K562 (cell line): ENCODE measurements at regions of chr19 and their contacts with region 1.

Region 1: GRCh38 chr19:47881757-47882156 is 4.4 kb downstream of the SULT2A1 start:
- DNase-seq: peak in 1 of 4 experiments; percentile 18
- ATAC-seq: peak; percentile 71
- H3K4me3 ChIP-seq: no peak overlapping the region
- H3K27ac ChIP-seq: no peak overlapping the region
- H3K4me1 ChIP-seq: peaks cover 5 to 9% of the 10 kb centered on the region in 2 experiments
- H3K27me3 ChIP-seq: no peaks in the 10 kb centered on the region
- CTCF ChIP-seq: 0 out of 6 replicates have a peak, but pooled peaks of 1 of the 3 experiments have one; percentile 5
- EP300 ChIP-seq: no peak
- POLR2A ChIP-seq: no peak
- RAD21 ChIP-seq: no peak

Region 2: DNA sequence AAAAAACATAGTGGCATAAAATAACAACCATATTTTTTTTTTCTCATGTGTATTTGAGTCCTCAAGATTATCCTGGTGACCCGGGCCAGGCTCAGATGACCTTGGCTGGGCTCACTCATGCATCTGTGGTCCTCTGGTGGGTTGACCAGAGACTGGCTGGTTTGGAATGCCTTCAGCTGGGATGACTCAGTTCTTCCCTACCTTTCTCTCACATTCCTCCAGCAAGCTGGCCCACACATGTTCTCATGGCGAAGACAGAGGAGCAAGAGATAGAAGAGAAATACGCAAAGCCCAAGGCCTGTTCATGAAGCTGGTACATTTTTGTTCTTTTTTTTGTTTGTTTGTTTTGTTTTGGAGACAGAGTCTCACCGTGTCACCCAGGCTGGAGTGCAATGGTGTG is 294.5 kb before region 1 on chr19:
- CTCF ChIA-PET with region 1: no interaction called
- POLR2A ChIA-PET with region 1: no interaction called
- in situ Hi-C with region 1: no loop called
- intact Hi-C with region 1: no loop called
- DNase-seq: no peak
- ATAC-seq: no peak
- H3K4me3 ChIP-seq: no peak overlapping the region
- H3K27ac ChIP-seq: no peak overlapping the region
- H3K4me1 ChIP-seq: no peaks in the 10 kb centered on the region
- H3K27me3 ChIP-seq: peaks cover 12 to 17% of the 10 kb centered on the region in 2 experiments; a peak in 4 of 5 replicates
- CTCF ChIP-seq: no peak
- EP300 ChIP-seq: no peak
- POLR2A ChIP-seq: no peak
- RAD21 ChIP-seq: no peak

Region 3: DNA sequence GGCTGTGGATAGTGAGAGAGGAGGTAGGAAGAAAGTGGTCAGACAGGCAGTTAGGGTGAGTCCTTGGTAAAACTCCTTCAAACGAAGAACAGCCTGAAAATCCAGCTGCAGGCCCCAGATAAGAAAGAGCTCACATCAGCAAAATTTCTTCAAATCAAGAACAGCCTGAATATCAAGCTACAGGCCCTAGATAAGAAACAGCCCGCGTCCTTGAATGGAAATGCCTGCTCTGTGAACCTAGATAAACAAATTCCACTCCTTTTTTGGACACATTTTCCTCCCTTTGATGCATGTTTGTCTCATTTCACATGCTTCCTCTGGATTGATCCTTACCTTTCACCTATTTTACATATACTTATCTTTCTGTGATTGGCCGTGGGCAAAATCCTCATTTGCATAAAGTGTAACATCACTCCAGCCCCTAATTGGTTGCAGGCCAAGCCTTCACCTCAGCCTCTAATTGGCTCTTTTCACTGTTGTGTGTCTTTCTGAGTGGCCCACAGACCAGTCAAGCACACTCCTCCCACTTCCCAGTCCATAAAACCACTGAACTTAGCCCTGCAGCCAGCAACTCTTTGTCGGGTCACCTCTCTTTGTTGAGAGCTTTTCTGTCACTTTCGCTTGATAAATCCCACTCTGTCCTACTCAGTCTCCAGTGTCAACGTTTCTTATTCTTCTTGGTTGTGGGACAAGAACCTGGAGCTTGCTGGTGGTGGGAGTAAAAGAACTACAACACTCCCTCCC is 10.3 kb after region 1 on chr19:
- CTCF ChIA-PET with region 1: no interaction called
- POLR2A ChIA-PET with region 1: interaction called, 10 read pairs
- in situ Hi-C with region 1: no loop called
- intact Hi-C with region 1: no loop called
- DNase-seq: peak; percentile 78 to 92 (median 81)
- ATAC-seq: peak; percentile 98
- H3K4me3 ChIP-seq: no peak overlapping the region
- H3K27ac ChIP-seq: peak overlapping the region; percentile 82
- H3K4me1 ChIP-seq: peaks cover 12 to 18% of the 10 kb centered on the region in 2 experiments
- H3K27me3 ChIP-seq: no peaks in the 10 kb centered on the region; a peak in 1 of 5 replicates
- CTCF ChIP-seq: no peak
- EP300 ChIP-seq: peak; percentile 99
- POLR2A ChIP-seq: peak; percentile 83
- RAD21 ChIP-seq: no peak